ENCODE measurements at regions of chr5 and their contacts with region 1.

Region 1: DNA sequence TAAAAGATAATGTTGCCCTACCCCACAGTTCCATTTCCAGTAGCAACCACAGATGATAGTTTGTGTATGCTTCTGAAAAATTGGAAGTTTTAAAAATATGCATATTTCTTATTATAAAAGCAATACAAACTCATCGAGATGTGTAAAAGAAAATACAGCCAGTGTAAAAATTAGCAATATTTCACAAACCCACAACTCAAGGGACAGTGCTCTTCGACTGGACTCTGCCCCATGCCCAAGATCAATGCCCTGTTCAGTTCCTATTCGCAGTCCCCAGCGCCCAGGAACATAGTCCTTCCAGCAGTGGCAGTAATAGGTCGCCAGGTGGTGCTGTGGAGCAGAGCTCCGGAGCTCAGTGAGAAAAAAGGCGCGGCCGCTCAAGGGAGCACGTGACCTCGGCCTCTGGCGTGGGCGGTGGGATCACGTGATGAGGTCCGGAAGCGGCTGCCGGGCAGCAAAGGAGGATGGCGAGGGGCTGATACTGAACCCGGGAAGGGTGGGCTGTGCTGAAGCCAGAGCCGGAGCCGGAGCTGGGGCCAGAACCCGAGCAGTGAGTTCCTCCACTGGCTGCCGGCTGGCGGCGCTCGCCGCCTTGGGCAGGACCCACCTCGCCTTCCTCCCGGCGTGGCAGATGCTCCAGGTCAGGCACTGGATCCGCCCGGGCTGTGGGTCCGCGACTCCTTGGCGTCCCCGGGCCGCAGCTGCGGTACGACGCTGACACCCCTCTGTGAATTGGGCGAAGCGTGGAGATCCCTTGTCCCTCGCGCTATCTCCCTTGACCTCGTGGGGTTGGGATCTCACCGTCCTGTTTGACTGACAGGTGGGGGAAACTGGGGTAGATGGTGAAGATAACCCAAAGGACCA is at the start of gene SLC36A1:
- DNase-seq: peak; percentile 97
- H3K4me3 ChIP-seq: peak within 1 kb of the TSS; percentile 69 to 84 (median 79)
- H3K27ac ChIP-seq: peak within 1 kb of the TSS; percentile 72 to 78 (median 76)
- H3K4me1 ChIP-seq: peaks cover 0 to 15% (median 10%) of the 10 kb centered on the region in 4 donors
- H3K27me3 ChIP-seq: no peaks in the 10 kb centered on the region
- CTCF ChIP-seq: peak; percentile 90 to 97 (median 96)
- EP300 ChIP-seq: no peak
- POLR2A ChIP-seq: peak in 1 of 2 donors; percentile 22
- total RNA-seq, gene SLC36A1: 6.9 to 9.7 (median 8.6) TPM

Region 2: GRCh38 chr5:151499501-151500035 is 52.2 kb after region 1 on chr5:
- intact Hi-C with region 1: loop called (anchors 1 kb)
- DNase-seq: no peak
- H3K4me3 ChIP-seq: no peak overlapping the region
- H3K27ac ChIP-seq: no peak overlapping the region
- H3K4me1 ChIP-seq: no peaks in the 10 kb centered on the region
- H3K27me3 ChIP-seq: no peaks in the 10 kb centered on the region
- CTCF ChIP-seq: no peak
- EP300 ChIP-seq: no peak
- POLR2A ChIP-seq: no peak

Region 3: GRCh38 chr5:151651997-151652645 is 204.7 kb after region 1 on chr5:
- intact Hi-C with region 1: loop called (anchors 1 kb)
- DNase-seq: peak; percentile 85
- H3K4me3 ChIP-seq: no peak overlapping the region
- H3K27ac ChIP-seq: no peak overlapping the region
- H3K4me1 ChIP-seq: no peaks in the 10 kb centered on the region
- H3K27me3 ChIP-seq: no peaks in the 10 kb centered on the region
- CTCF ChIP-seq: peak; percentile 48 to 85 (median 78)
- EP300 ChIP-seq: no peak
- POLR2A ChIP-seq: no peak

Measured in sigmoid colon (tissue), 7 donors.